ENCODE measurements at regions of chr5 and their contacts with region 1.

Region 1: GRCh38 chr5:59193616-59194319 is 610.9 kb downstream of the RAB3C start:
- DNase-seq: no peak
- H3K4me3 ChIP-seq: no peak overlapping the region
- H3K27ac ChIP-seq: no peak overlapping the region
- H3K4me1 ChIP-seq: peaks cover 0 to 2% (median 2%) of the 10 kb centered on the region in 6 donors
- H3K27me3 ChIP-seq: no peaks in the 10 kb centered on the region
- CTCF ChIP-seq: no peak
- POLR2A ChIP-seq: no peak

Region 2: GRCh38 chr5:59380350-59380951 is 186.7 kb after region 1 on chr5:
- intact Hi-C with region 1: loop called (anchors 5 kb)
- DNase-seq: no peak
- H3K4me3 ChIP-seq: no peak overlapping the region
- H3K27ac ChIP-seq: no peak overlapping the region
- H3K4me1 ChIP-seq: peaks cover 0 to 7% (median 2%) of the 10 kb centered on the region in 6 donors
- H3K27me3 ChIP-seq: no peaks in the 10 kb centered on the region
- CTCF ChIP-seq: peak in 9 of 11 experiments; percentile 21 to 53 (median 41)
- POLR2A ChIP-seq: no peak

Region 3: GRCh38 chr5:59430066-59430685 is 236.4 kb after region 1 on chr5:
- intact Hi-C with region 1: no loop called
- DNase-seq: no peak
- H3K4me3 ChIP-seq: no peak overlapping the region
- H3K27ac ChIP-seq: no peak overlapping the region
- H3K4me1 ChIP-seq: no peaks in the 10 kb centered on the region
- H3K27me3 ChIP-seq: no peaks in the 10 kb centered on the region
- CTCF ChIP-seq: no peak
- POLR2A ChIP-seq: no peak

Measured in spleen (tissue), 13 donors.